Gastrocnemius medialis (tissue), 4 donors: ENCODE measurements at regions of chr4 and their contacts with region 1.

Region 1: DNA sequence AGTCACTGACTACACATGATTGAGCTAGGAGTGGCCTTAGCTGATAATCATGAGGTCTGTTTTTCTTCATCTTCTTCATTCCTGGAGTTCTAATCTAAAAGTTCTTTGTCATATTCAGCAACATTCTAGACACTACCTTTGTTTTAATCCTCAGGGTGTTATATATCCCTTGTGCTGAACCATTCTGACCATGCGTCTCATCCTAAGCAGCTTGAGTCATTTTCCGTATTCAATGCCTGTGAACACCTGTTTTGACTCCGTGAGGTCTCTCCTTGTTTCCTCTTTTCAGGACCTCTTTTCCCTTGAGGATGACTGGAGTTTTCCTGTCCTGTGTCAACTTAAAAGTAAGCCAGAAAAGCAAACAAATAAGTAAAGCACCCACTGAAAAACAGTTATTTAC is 597.9 kb downstream of the GBA3 start:
- DNase-seq: peak; percentile 43 to 45
- ATAC-seq: peak; percentile 93 to 98
- H3K4me3 ChIP-seq: peak overlapping the region in 2 of 4 donors; percentile 23 to 31
- H3K27ac ChIP-seq: peak overlapping the region; percentile 70 to 80 (median 78)
- H3K4me1 ChIP-seq: peaks cover 6 to 13% of the 10 kb centered on the region in 2 donors
- H3K27me3 ChIP-seq: no peaks in the 10 kb centered on the region
- CTCF ChIP-seq: no peak
- POLR2A ChIP-seq: peak in 1 of 2 donors; percentile 43

Region 2: GRCh38 chr4:23237771-23238170 is 52.9 kb before region 1 on chr4:
- in situ Hi-C with region 1: no loop called
- intact Hi-C with region 1: loop called (anchors 2 kb)
- DNase-seq: peak; percentile 67 to 86
- ATAC-seq: peak; percentile 93
- H3K4me3 ChIP-seq: no peak overlapping the region
- H3K27ac ChIP-seq: peak overlapping the region; percentile 44 to 66 (median 52)
- H3K4me1 ChIP-seq: peaks cover 14 to 31% of the 10 kb centered on the region in 2 donors
- H3K27me3 ChIP-seq: no peaks in the 10 kb centered on the region
- CTCF ChIP-seq: no peak
- POLR2A ChIP-seq: no peak

Region 3: DNA sequence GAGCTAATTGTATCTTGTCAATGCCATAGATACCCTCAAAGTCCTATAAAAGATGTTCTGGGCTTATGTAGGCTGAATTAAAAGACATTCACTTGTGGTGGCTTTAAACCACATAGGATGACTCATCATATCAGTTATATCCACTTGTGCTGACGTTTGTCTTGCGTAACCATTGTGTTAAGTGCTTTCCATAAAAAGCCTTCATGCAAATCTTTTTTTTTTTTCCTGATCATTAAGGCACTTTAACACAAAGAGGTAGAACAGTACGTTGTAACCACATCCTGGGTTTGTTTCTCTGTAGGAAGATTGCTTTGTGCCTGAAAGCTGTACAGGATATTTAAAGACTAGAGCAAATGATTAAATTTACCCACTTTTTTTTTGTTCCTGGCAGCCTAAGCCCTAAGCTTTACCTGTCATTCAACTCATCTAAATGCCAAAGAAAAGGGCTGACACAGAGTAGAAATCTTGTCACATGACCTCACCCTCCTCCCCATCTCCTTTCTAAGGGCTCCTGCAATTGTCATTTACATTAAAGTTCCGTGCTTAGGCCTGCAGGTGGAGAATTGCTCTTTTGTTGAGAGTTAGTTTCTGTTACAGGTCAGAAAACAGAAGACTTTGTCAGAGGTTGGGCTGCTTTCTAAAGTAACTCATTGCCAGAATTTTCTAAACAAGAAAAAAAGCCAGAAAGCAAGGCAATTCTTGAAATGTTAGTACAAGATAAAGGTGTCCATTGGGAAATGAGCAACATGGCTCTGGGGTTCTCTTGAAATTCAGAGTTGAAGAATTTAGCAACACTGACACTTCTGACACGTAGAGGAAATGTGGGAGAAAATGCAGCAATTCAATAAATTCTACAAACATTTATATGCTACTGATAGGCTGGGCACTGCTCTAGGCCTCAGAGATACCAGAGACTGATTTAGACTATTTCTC is 43.6 kb after region 1 on chr4:
- in situ Hi-C with region 1: no loop called
- intact Hi-C with region 1: loop called (anchors 5 kb)
- DNase-seq: peak in 1 of 2 donors; percentile 13
- ATAC-seq: peak; percentile 92 to 93
- H3K4me3 ChIP-seq: peak overlapping the region in 3 of 4 donors; percentile 10 to 19 (median 11)
- H3K27ac ChIP-seq: peak overlapping the region; percentile 66 to 75 (median 74)
- H3K4me1 ChIP-seq: peaks cover 7 to 24% of the 10 kb centered on the region in 2 donors
- H3K27me3 ChIP-seq: no peaks in the 10 kb centered on the region
- CTCF ChIP-seq: peak in 1 of 5 experiments; percentile 28
- POLR2A ChIP-seq: no peak